ENCODE measurements at regions of chr10 and their contacts with region 1.

Region 1: DNA sequence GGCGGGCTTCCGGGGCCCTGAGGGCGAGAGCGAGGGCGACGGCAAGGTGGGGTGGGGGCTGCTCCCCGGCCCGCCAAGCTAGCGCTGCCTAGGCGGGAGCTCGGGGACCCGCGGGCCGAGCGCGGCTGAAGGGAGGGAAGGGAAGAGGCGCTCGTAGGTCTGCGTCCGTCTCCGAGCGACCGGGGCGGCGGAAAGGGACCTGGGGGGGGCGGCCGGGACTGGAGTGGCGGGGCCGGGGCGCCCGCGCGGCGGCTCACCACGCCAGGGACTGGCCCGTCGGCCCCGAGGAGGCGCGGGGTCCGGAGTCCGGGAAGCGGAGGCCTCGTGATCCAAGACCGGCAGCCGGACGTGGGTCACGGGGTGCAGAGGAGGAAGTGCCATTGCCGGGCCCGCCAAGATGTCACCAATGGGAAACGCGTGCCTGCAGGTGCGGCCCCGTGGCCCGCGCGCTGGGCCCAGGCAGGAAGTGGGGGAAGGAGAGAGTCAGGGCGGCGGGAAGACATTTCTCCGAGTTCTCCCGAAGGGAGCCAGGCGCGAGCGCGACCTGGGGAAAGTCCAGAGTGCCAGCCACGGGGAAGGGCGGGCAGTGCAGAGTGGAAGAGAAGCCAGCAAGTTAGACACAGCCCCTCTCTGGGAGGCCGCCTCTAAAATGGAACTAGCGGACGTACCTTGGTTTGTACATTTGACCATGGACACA is 11.9 kb downstream of the HNRNPF start:
- H3K4me3 Mint-ChIP-seq: peak overlapping the region; percentile 82
- H3K27ac Mint-ChIP-seq: peak overlapping the region; percentile 83
- H3K4me1 Mint-ChIP-seq: peaks cover 83% of the 10 kb centered on the region
- H3K27me3 Mint-ChIP-seq: no peaks in the 10 kb centered on the region

Region 2: DNA sequence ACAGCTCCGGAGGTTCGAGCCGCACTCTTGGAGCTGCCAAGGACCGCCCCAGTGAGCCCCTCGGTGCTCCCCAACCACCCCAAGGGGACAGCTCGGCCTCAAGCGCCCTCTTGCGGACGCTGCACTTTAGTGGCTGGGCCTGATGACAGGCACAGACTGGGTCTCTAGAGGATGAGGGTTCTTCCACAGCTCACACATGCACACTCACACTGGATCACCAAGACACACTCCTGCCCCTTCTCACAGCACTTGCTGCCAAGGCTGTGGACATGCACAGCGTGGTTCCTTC is 318.1 kb before region 1 on chr10:
- intact Hi-C with region 1: no loop called
- H3K4me3 Mint-ChIP-seq: no peak overlapping the region
- H3K27ac Mint-ChIP-seq: no peak overlapping the region
- H3K4me1 Mint-ChIP-seq: peaks cover 42% of the 10 kb centered on the region
- H3K27me3 Mint-ChIP-seq: peaks cover 68% of the 10 kb centered on the region

Region 3: GRCh38 chr10:43361986-43362839 is 34.9 kb before region 1 on chr10:
- intact Hi-C with region 1: loop called (anchors 5 kb)
- H3K4me3 Mint-ChIP-seq: peak overlapping the region; percentile 84
- H3K27ac Mint-ChIP-seq: peak overlapping the region; percentile 85
- H3K4me1 Mint-ChIP-seq: peaks cover 23% of the 10 kb centered on the region
- H3K27me3 Mint-ChIP-seq: no peaks in the 10 kb centered on the region

Region 4: DNA sequence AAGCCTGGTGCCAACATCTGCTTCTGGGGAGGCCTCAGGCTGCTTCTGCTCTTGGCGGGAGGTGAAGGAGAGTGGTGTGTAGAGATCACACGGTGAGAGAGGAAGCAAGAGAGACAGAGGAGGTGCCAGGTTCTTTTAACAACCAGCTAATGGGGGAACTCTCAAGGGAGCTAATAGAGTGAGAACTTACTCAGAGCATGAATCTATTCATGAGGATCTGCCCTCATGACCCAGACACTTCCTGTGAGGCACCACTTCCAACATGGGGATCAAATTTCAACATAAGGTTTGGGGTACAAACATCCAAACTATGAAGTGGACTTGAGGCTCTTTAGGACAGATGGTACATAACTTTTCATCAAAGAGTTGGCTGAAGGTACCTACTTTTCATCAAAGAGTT is 256.7 kb after region 1 on chr10:
- intact Hi-C with region 1: no loop called
- H3K4me3 Mint-ChIP-seq: no peak overlapping the region
- H3K27ac Mint-ChIP-seq: no peak overlapping the region
- H3K4me1 Mint-ChIP-seq: peaks cover 7% of the 10 kb centered on the region
- H3K27me3 Mint-ChIP-seq: peaks cover 25% of the 10 kb centered on the region

Region 5: GRCh38 chr10:43756341-43756740 is 359.3 kb after region 1 on chr10:
- intact Hi-C with region 1: no loop called
- H3K4me3 Mint-ChIP-seq: no peak overlapping the region
- H3K27ac Mint-ChIP-seq: no peak overlapping the region
- H3K4me1 Mint-ChIP-seq: no peaks in the 10 kb centered on the region
- H3K27me3 Mint-ChIP-seq: peaks cover 2% of the 10 kb centered on the region